ENCODE measurements at regions of chr14 and their contacts with region 1.

Region 1: GRCh38 chr14:29536886-29537511 is 390.6 kb downstream of the PRKD1 start:
- DNase-seq: peak in 2 of 42 donors; percentile 12 to 20

Region 2: GRCh38 chr14:28751467-28752058 is 785.4 kb before region 1 on chr14:
- intact Hi-C with region 1: loop called (anchors 10 kb)
- DNase-seq: peak in 26 of 42 donors; percentile 37 to 84 (median 68)

Region 3: DNA sequence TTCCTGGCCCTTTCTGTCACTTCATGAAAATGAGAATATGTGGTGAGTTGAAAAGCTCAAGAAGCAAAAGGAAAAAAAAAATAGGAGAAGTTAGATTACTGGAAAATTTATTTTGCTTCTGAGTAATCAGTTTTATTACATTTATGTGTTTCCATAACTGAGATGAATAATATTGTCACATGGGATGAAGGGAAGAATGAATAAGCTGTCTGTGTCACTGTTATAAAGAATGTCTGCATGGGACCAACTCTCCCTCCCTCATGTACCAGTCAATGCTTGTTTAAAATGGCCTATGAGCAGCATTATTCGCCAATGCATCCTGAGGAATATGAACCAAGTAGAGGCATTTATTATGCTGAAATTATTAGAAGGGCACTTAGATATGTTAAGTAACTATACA is 144.3 kb after region 1 on chr14:
- intact Hi-C with region 1: no loop called
- DNase-seq: no peak